ENCODE measurements at regions of chr19 and their contacts with region 1.

Region 1: GRCh38 chr19:38452428-38453366 is 19.2 kb downstream of the RYR1 start:
- DNase-seq: no peak
- H3K4me3 ChIP-seq: no peak overlapping the region
- CTCF ChIP-seq: no peak

Region 2: GRCh38 chr19:38387550-38388348 is 64.9 kb before region 1 on chr19 and contains the start of gene GGN:
- in situ Hi-C with region 1: no loop called
- DNase-seq: peak; percentile 80
- H3K4me3 ChIP-seq: peak within 1 kb of the TSS; percentile 81
- CTCF ChIP-seq: no peak

Region 3: DNA sequence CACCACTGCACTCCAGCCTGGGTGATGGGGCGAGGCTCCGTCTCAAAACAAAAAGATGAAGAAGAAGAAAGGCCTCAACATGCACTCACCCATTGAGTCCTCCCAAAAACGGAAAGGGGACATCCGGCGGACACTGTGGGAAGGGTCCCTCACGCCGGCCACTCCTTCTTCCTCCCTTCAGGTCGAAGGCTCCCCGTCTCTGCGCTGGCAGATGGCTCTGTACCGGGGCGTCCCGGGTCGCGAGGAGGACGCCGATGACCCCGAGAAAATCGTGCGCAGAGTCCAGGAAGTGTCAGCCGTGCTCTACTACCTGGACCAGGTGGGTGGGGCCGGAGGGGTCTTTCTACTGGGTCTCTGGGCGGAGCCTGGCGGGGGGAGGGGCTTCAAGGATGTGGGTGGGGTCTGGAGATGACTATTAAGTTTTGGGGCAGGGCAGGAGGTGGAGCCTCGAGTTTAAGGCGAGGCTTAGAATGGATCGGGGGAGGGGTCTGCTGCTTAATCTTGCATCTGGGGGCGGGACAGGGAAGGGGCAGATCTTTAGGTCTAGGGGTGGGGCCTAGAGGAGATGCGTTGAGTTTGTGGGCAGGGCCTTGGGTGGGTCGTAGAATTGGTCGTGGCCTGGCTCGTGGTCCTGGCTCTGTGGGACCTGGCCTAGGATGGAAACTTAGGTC is 74.9 kb after region 1 on chr19:
- in situ Hi-C with region 1: loop called (anchors 10 kb)
- DNase-seq: no peak
- H3K4me3 ChIP-seq: no peak overlapping the region
- CTCF ChIP-seq: no peak

Region 4: GRCh38 chr19:38544959-38545315 is 92.2 kb after region 1 on chr19:
- in situ Hi-C with region 1: loop called (anchors 5 kb)
- DNase-seq: no peak
- H3K4me3 ChIP-seq: no peak overlapping the region
- CTCF ChIP-seq: no peak